OCI-LY7 (cell line): ENCODE measurements at regions of chr19 and their contacts with region 1.

Region 1: GRCh38 chr19:10269333-10270179 is 1.4 kb upstream of the ICAM1 start:
- DNase-seq: peak; percentile 82
- H3K4me3 ChIP-seq: peak overlapping the region; percentile 66
- H3K27ac ChIP-seq: no peak overlapping the region
- H3K4me1 ChIP-seq: peaks cover 31% of the 10 kb centered on the region
- CTCF ChIP-seq: peak; percentile 94

Region 2: GRCh38 chr19:10289167-10289835 is 19.7 kb after region 1 on chr19:
- CTCF ChIA-PET with region 1: interaction called, 3 read pairs
- POLR2A ChIA-PET with region 1: interaction called, 13 read pairs
- intact Hi-C with region 1: no loop called
- DNase-seq: peak; percentile 89
- H3K4me3 ChIP-seq: peak overlapping the region; percentile 68
- H3K27ac ChIP-seq: peak overlapping the region; percentile 56
- H3K4me1 ChIP-seq: peaks cover 72% of the 10 kb centered on the region
- CTCF ChIP-seq: no peak

Region 3: DNA sequence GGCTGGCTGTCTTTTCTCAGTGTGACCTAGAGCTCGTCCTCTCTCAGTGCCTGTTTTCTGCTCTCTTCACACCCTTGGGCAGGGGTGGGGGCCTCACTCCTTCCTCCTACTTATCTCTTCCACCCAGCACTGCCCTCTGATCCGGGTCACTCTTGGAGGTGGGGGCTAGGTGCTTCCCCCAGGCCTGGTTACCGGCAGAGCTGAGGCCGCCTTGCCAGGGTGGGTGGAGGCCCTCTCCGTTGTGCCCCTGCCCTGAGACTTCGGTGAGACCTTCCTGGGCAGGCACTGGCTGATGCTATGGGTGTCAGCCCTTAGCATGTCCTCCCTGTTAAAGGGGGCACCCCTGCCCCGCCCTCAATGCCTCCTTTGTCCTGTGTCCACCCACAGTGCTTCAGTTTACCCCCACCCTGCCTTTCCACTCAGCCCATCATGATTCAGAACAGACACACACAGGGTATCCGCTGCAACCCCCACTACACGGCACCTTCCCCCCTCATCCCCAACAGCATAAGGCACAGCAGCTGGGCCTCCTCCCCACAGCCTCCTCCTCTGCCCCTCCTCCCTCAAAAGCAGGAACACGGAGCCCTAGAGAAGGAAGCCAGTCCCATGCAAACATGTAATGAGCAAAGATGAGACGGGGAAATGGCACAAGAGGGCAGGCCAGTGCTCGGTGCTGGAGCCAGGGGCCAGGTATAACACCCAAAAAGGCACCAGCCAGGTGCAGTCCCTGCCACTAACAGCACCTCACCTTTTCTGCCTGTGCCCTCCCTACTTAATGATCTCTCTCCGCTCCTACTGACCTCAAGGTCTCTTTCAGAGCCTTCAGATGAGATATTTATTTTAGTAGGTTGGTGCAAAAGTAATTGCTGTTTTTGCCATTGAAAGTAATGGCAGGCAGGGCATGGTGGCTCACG is 30.2 kb after region 1 on chr19:
- CTCF ChIA-PET with region 1: no interaction called
- POLR2A ChIA-PET with region 1: no interaction called
- intact Hi-C with region 1: no loop called
- DNase-seq: no peak
- H3K4me3 ChIP-seq: no peak overlapping the region
- H3K27ac ChIP-seq: no peak overlapping the region
- H3K4me1 ChIP-seq: peaks cover 9% of the 10 kb centered on the region
- CTCF ChIP-seq: no peak

Region 4: GRCh38 chr19:10332955-10333757 is 63.6 kb after region 1 on chr19 and contains the start of gene RAVER1:
- CTCF ChIA-PET with region 1: no interaction called
- POLR2A ChIA-PET with region 1: interaction called, 4 read pairs
- intact Hi-C with region 1: loop called (anchors 2 kb)
- DNase-seq: peak; percentile 99
- H3K4me3 ChIP-seq: peak within 1 kb of the TSS; percentile 83
- H3K27ac ChIP-seq: peak within 1 kb of the TSS; percentile 82
- H3K4me1 ChIP-seq: peaks cover 29% of the 10 kb centered on the region
- CTCF ChIP-seq: no peak
- total RNA-seq, gene RAVER1: 21.6 and 35.7 TPM in 2 replicates

Region 5: GRCh38 chr19:10380313-10381102 is 111.0 kb after region 1 on chr19 and contains the start of gene TYK2:
- CTCF ChIA-PET with region 1: interaction called, 7 read pairs
- POLR2A ChIA-PET with region 1: interaction called, 14 read pairs
- intact Hi-C with region 1: loop called (anchors 1 kb)
- DNase-seq: peak; percentile 99
- H3K4me3 ChIP-seq: peak within 1 kb of the TSS; percentile 91
- H3K27ac ChIP-seq: peak within 1 kb of the TSS; percentile 52
- H3K4me1 ChIP-seq: peaks cover 10% of the 10 kb centered on the region
- CTCF ChIP-seq: 0 out of 2 replicates have a peak, but pooled peaks have one; percentile 17
- total RNA-seq, gene TYK2: 151 and 185 TPM in 2 replicates

Region 6: GRCh38 chr19:10388957-10389356 is 119.4 kb after region 1 on chr19:
- CTCF ChIA-PET with region 1: interaction called, 4 read pairs
- POLR2A ChIA-PET with region 1: interaction called, 4 read pairs
- intact Hi-C with region 1: loop called (anchors 1 kb)
- DNase-seq: peak; percentile 79
- H3K4me3 ChIP-seq: no peak overlapping the region
- H3K27ac ChIP-seq: no peak overlapping the region
- H3K4me1 ChIP-seq: peaks cover 2% of the 10 kb centered on the region
- CTCF ChIP-seq: peak; percentile 99